ENCODE measurements at regions of chr20 and their contacts with region 1.

Region 1: DNA sequence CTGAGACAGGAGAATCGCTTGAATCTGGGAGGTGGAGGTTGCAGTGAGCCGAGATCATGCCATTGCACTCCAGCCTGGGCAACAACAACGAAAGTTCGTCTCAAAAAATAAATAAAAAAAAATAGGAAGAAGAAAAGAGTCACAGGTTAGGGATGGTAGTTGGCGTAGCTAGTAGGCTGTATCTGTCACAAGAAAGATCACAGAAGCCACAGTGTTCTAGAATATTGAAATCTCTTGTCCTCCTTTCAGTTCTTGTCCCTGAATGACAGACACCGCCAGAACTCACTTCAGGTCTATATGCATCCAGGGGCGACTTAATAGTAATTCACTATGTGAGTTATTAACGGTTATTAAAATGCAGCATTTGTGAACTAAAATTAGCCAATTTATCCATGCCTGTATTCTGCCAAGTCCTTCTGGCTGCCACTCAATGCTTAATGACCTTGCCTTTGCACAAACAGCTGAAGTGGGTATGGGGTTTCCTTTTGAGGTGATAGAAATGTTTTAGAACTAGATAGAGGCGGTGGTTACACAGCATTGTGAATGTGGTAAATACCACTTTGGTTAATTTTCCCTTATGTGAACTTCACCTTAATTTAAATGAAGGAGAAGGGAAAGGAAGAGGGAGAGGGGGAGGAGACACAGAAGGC is 41.3 kb upstream of the ZMYND8 start:
- DNase-seq: no peak
- H3K4me3 Mint-ChIP-seq: no peak overlapping the region
- H3K27ac Mint-ChIP-seq: no peak overlapping the region
- H3K4me1 Mint-ChIP-seq: peaks cover 7% of the 10 kb centered on the region
- H3K27me3 Mint-ChIP-seq: no peaks in the 10 kb centered on the region

Region 2: GRCh38 chr20:47501483-47502270 is 103.9 kb after region 1 on chr20 and contains the start of gene NCOA3:
- intact Hi-C with region 1: loop called (anchors 5 kb)
- DNase-seq: peak; percentile 89
- H3K4me3 Mint-ChIP-seq: peak within 1 kb of the TSS; percentile 92
- H3K27ac Mint-ChIP-seq: peak within 1 kb of the TSS; percentile 99
- H3K4me1 Mint-ChIP-seq: peaks cover 61% of the 10 kb centered on the region
- H3K27me3 Mint-ChIP-seq: no peaks in the 10 kb centered on the region
- total RNA-seq, gene NCOA3: 132 and 133 TPM in 2 replicates